ENCODE measurements at regions of chr5 and their contacts with region 1.

Region 1: DNA sequence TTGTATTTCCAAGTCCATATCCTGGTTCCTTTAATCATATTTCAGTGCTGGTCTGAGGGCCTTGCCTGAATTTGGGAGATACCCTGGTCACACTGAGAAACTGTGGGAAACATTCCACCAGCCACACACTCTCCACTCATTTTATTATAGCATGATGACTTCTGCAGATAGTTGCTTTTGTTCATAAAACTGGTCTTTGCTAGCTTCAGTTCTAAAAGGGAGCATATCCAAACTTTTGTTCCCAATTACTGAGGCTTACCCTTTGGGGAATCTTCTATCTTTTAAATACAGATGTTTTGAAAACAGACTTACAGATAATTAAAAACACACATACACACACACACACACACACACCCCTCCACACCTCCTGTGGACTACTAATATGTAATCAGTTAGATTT is 21.0 kb downstream of the DMGDH start:
- DNase-seq: no peak
- ATAC-seq: no peak
- H3K4me3 ChIP-seq: no peak overlapping the region
- H3K4me3 Mint-ChIP-seq: no peak overlapping the region
- H3K27ac ChIP-seq: no peak overlapping the region
- H3K27ac Mint-ChIP-seq: no peak overlapping the region
- H3K4me1 ChIP-seq: no peaks in the 10 kb centered on the region
- H3K4me1 Mint-ChIP-seq: no peaks in the 10 kb centered on the region
- H3K27me3 ChIP-seq: no peaks in the 10 kb centered on the region
- H3K27me3 Mint-ChIP-seq: peaks cover 10 to 17% of the 10 kb centered on the region in 2 donors
- CTCF ChIP-seq: no peak

Region 2: DNA sequence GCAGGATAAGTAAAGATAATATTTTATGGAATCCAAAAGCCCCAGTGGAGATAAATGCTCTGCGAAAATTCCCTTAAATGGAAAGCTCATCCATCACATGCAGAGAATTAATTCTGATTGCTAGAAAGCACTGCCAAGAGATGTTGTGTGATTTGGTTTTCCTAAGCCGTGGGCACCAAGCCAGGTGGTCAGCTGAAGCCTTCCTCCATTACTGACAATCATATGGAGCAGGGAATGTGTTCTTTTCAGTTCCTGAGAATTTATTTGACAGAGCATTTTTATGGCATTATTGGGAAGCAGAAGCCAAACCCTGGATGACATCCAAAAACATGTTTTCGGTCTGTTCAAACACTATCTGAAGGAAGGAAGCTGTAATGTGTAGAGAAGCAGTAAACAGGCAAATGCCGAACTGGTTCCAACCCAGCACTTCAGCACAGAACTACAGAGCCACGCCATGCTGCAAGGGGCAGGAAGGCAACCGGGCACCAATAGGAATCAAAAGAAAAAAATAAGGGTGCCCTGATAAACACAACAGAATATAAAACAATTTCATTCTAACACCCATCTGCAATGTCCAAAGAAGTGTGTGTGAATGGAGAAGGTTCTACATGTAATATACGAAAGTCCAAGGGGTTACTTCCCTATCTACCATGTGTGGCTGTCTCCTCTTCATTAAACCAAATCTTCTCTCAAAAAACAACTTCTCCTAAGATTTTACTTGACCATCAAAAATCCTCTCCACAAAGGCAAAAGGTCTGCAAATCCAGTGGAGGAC is 75.6 kb before region 1 on chr5:
- intact Hi-C with region 1: loop called (anchors 2 kb)
- DNase-seq: no peak
- ATAC-seq: no peak
- H3K4me3 ChIP-seq: no peak overlapping the region
- H3K4me3 Mint-ChIP-seq: no peak overlapping the region
- H3K27ac ChIP-seq: no peak overlapping the region
- H3K27ac Mint-ChIP-seq: no peak overlapping the region
- H3K4me1 ChIP-seq: no peaks in the 10 kb centered on the region
- H3K4me1 Mint-ChIP-seq: peaks cover 0 to 6% of the 10 kb centered on the region in 2 donors
- H3K27me3 ChIP-seq: no peaks in the 10 kb centered on the region
- H3K27me3 Mint-ChIP-seq: no peaks in the 10 kb centered on the region
- CTCF ChIP-seq: no peak